GM12878 (cell line): ENCODE measurements at regions of chr18 and their contacts with region 1.

Region 1: GRCh38 chr18:2655178-2655953 is at the start of gene SMCHD1:
- DNase-seq: no peak
- ATAC-seq: peak; percentile 75
- H3K4me3 ChIP-seq: peak within 1 kb of the TSS; percentile 89
- H3K27ac ChIP-seq: peak within 1 kb of the TSS; percentile 89
- H3K4me1 ChIP-seq: peaks cover 3% of the 10 kb centered on the region
- H3K27me3 ChIP-seq: no peaks in the 10 kb centered on the region
- CTCF ChIP-seq: no peak
- EP300 ChIP-seq: no peak
- POLR2A ChIP-seq: peak; percentile 93
- RAD21 ChIP-seq: no peak
- polyA plus RNA-seq, gene SMCHD1: 6.0 to 7.2 TPM

Region 2: DNA sequence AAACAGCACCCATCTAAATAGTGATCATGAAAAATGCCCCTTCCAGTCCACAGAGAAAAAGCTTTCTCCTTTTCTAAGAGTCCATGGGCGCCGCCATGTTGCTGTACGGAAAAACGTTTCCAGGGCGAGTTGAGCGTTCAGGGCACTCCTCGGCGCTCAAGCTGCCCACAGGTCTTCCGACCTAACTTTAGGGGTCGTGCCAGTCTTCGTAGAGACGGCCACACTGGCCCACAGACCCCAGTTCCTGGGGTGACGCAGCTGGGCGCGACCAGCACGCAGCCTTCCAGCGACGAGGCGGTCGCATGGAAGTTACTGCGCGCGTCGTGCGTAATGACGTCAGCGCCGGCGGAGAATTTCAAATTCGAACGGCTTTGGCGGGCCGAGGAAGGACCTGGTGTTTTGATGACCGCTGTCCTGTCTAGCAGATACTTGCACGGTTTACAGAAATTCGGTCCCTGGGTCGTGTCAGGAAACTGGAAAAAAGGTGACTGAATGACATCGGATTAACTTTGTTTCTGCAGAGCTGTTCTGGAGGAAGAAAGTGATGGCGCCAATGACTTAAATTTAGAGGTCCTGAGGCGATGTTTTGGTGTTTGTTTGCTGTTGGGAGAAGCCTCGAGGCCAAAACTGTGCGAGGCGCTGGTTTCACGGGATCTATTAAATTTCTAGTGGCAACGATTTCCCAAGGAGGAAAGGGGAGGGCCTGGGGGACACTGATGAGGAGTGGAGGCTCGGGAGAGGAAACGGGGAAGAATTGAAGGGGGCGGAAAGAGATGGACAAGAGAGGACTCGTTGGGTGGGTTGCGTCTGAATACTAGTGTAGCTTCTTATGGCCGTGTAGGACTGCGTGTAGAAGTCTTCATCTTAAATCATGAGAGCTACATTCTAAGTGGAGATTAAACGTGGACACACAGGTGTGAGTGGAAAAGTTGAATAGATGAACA is 83.9 kb before region 1 on chr18 and contains the starts of genes METTL4 and NDC80:
- CTCF ChIA-PET with region 1: interaction called, 3 read pairs
- POLR2A ChIA-PET with region 1: interaction called, 10 read pairs
- RAD21 ChIA-PET with region 1: interaction called, 32 read pairs
- SMC1A ChIA-PET with region 1: interaction called, 11 read pairs
- in situ Hi-C with region 1: no loop called
- intact Hi-C with region 1: loop called (anchors 2 kb)
- DNase-seq: peak; percentile 71
- ATAC-seq: peak; percentile 82
- H3K4me3 ChIP-seq: peak within 1 kb of the TSS; percentile 82
- H3K27ac ChIP-seq: peak within 1 kb of the TSS; percentile 100
- H3K4me1 ChIP-seq: peaks cover 5% of the 10 kb centered on the region
- H3K27me3 ChIP-seq: no peaks in the 10 kb centered on the region
- CTCF ChIP-seq: 0 out of 6 replicates have a peak, but pooled peaks of 1 of the 3 experiments have one; percentile 12
- EP300 ChIP-seq: no peak
- POLR2A ChIP-seq: peak; percentile 87
- RAD21 ChIP-seq: no peak
- polyA plus RNA-seq, gene METTL4: 7.6 to 13.3 TPM
- polyA plus RNA-seq, gene NDC80: 54.4 to 55.0 TPM

Region 3: GRCh38 chr18:2606335-2606734 is 49.0 kb before region 1 on chr18:
- CTCF ChIA-PET with region 1: interaction called, 4 read pairs
- POLR2A ChIA-PET with region 1: interaction called, 13 read pairs
- RAD21 ChIA-PET with region 1: interaction called, 31 read pairs
- SMC1A ChIA-PET with region 1: interaction called, 13 read pairs
- in situ Hi-C with region 1: no loop called
- intact Hi-C with region 1: no loop called
- DNase-seq: no peak
- ATAC-seq: no peak
- H3K4me3 ChIP-seq: no peak overlapping the region
- H3K27ac ChIP-seq: peak overlapping the region; percentile 46; the same call in 1 of the 2 replicates
- H3K4me1 ChIP-seq: no peaks in the 10 kb centered on the region
- H3K27me3 ChIP-seq: no peaks in the 10 kb centered on the region
- CTCF ChIP-seq: no peak
- EP300 ChIP-seq: no peak
- POLR2A ChIP-seq: no peak
- RAD21 ChIP-seq: no peak

Region 4: GRCh38 chr18:2636126-2636631 is 19.2 kb before region 1 on chr18:
- CTCF ChIA-PET with region 1: interaction called, 9 read pairs
- POLR2A ChIA-PET with region 1: interaction called, 44 read pairs
- RAD21 ChIA-PET with region 1: interaction called, 33 read pairs
- SMC1A ChIA-PET with region 1: interaction called, 29 read pairs
- in situ Hi-C with region 1: no loop called
- intact Hi-C with region 1: loop called (anchors 2 kb)
- DNase-seq: no peak
- ATAC-seq: peak; percentile 11
- H3K4me3 ChIP-seq: peak overlapping the region; percentile 57; the same call in 1 of the 2 replicates
- H3K27ac ChIP-seq: peak overlapping the region; percentile 99
- H3K4me1 ChIP-seq: peaks cover 40% of the 10 kb centered on the region
- H3K27me3 ChIP-seq: no peaks in the 10 kb centered on the region
- CTCF ChIP-seq: no peak
- EP300 ChIP-seq: no peak
- POLR2A ChIP-seq: no peak
- RAD21 ChIP-seq: no peak

Region 5: GRCh38 chr18:2641638-2642037 is 13.7 kb before region 1 on chr18:
- CTCF ChIA-PET with region 1: interaction called, 9 read pairs
- POLR2A ChIA-PET with region 1: interaction called, 44 read pairs
- RAD21 ChIA-PET with region 1: interaction called, 33 read pairs
- SMC1A ChIA-PET with region 1: interaction called, 29 read pairs
- in situ Hi-C with region 1: no loop called
- intact Hi-C with region 1: loop called (anchors 2 kb)
- DNase-seq: peak; percentile 77
- ATAC-seq: peak; percentile 80
- H3K4me3 ChIP-seq: peak overlapping the region; percentile 33
- H3K27ac ChIP-seq: peak overlapping the region; percentile 99
- H3K4me1 ChIP-seq: peaks cover 49% of the 10 kb centered on the region
- H3K27me3 ChIP-seq: no peaks in the 10 kb centered on the region
- CTCF ChIP-seq: no peak
- EP300 ChIP-seq: peak in 1 of 2 experiments; percentile 57; a peak in 1 of 4 replicates
- POLR2A ChIP-seq: no peak
- RAD21 ChIP-seq: no peak

Region 6: GRCh38 chr18:2687390-2688001 is 32.1 kb after region 1 on chr18:
- CTCF ChIA-PET with region 1: no interaction called
- POLR2A ChIA-PET with region 1: interaction called, 8 read pairs
- RAD21 ChIA-PET with region 1: interaction called, 11 read pairs
- SMC1A ChIA-PET with region 1: interaction called, 6 read pairs
- in situ Hi-C with region 1: no loop called
- intact Hi-C with region 1: no loop called
- DNase-seq: peak; percentile 26
- ATAC-seq: peak; percentile 63
- H3K4me3 ChIP-seq: peak overlapping the region; percentile 37
- H3K27ac ChIP-seq: peak overlapping the region; percentile 69
- H3K4me1 ChIP-seq: peaks cover 7% of the 10 kb centered on the region; the same call in 1 of the 2 replicates
- H3K27me3 ChIP-seq: no peaks in the 10 kb centered on the region
- CTCF ChIP-seq: no peak
- EP300 ChIP-seq: no peak
- POLR2A ChIP-seq: no peak
- RAD21 ChIP-seq: no peak

Region 7: GRCh38 chr18:2971741-2972552 is 316.6 kb after region 1 on chr18:
- CTCF ChIA-PET with region 1: no interaction called
- POLR2A ChIA-PET with region 1: no interaction called
- RAD21 ChIA-PET with region 1: no interaction called
- SMC1A ChIA-PET with region 1: no interaction called
- in situ Hi-C with region 1: no loop called
- intact Hi-C with region 1: loop called (anchors 10 kb)
- DNase-seq: peak; percentile 90
- ATAC-seq: peak; percentile 89
- H3K4me3 ChIP-seq: peak overlapping the region; percentile 60
- H3K27ac ChIP-seq: peak overlapping the region; percentile 94
- H3K4me1 ChIP-seq: peaks cover 51% of the 10 kb centered on the region
- H3K27me3 ChIP-seq: no peaks in the 10 kb centered on the region
- CTCF ChIP-seq: no peak
- EP300 ChIP-seq: peak; percentile 32 to 48; a peak in 1 of 4 replicates
- POLR2A ChIP-seq: peak; percentile 78
- RAD21 ChIP-seq: no peak